Activated CD4-positive, alpha-beta T cell treated with anti-CD3 and anti-CD28 coated beads for 36 hours (primary cell): ENCODE measurements at regions of chr1 and their contacts with region 1.

Region 1: GRCh38 chr1:160726498-160727315 is 12.3 kb upstream of the SLAMF7 start:
- DNase-seq: peak; percentile 77
- ATAC-seq: peak; percentile 72
- H3K4me3 Mint-ChIP-seq: no peak overlapping the region
- H3K27ac Mint-ChIP-seq: no peak overlapping the region
- H3K4me1 Mint-ChIP-seq: peaks cover 28% of the 10 kb centered on the region
- H3K27me3 Mint-ChIP-seq: no peaks in the 10 kb centered on the region

Region 2: GRCh38 chr1:160675641-160676410 is 50.9 kb before region 1 on chr1:
- CTCF ChIA-PET with region 1: interaction called, 42 read pairs
- POLR2A ChIA-PET with region 1: no interaction called
- intact Hi-C with region 1: loop called (anchors 1 to 2 kb)
- DNase-seq: peak; percentile 89
- ATAC-seq: peak; percentile 70
- H3K4me3 Mint-ChIP-seq: peak overlapping the region; percentile 26
- H3K27ac Mint-ChIP-seq: peak overlapping the region; percentile 48
- H3K4me1 Mint-ChIP-seq: peaks cover 42% of the 10 kb centered on the region
- H3K27me3 Mint-ChIP-seq: no peaks in the 10 kb centered on the region

Region 3: DNA sequence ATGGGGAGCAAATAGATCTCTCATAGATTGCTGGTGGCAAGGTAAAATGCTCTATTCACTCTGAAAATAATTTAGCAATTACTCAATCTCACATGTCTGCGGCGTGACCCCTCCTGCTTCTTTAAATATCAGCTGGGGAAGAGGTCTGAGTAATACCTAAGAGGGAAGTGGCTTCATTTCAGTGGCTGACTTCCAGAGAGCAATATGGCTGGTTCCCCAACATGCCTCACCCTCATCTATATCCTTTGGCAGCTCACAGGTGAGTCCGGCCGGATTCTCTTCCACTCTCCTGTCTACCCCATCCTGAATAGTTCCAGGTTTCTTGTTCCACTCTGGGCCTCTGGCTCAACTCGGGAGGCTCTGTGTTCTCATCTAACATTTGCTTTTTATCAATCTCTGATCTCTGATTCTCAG is 12.4 kb after region 1 on chr1 and contains the start of gene SLAMF7:
- CTCF ChIA-PET with region 1: interaction called, 21 read pairs
- POLR2A ChIA-PET with region 1: no interaction called
- intact Hi-C with region 1: loop called in 1 of 2 experiments (anchors 2 kb)
- DNase-seq: peak; percentile 61
- ATAC-seq: peak; percentile 76
- H3K4me3 Mint-ChIP-seq: peak within 1 kb of the TSS; percentile 72
- H3K27ac Mint-ChIP-seq: peak within 1 kb of the TSS; percentile 85
- H3K4me1 Mint-ChIP-seq: peaks cover 69% of the 10 kb centered on the region
- H3K27me3 Mint-ChIP-seq: no peaks in the 10 kb centered on the region
- total RNA-seq, gene SLAMF7: 35.9 to 40.3 TPM

Region 4: DNA sequence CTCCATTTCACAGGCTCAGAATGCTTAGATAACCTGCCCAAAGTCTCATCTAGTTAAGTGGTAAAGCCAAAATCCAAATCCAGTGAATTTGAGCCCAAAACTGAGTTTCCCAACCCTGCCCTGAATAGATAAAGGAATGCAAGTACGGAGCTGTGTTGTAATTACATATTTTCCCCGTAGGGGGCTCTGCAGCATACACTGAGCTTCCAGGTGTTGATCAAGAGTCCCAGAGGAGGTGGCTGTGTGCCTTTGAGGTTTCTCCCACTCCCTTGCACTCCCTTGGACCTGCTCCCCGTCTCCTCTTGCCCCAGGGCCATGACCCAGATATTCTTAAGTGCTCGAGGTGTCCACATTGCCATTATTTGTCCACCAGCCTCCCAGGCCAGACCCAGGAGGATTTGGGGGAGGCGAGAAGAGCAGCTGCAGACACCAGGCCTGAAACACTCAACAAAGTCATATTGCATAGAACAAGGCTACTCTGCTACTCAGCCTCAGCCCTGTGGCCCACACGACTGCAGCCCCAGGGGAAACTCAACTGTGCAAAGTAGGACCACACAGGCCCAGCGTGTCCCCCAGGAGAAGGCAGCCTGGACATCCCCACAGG is 50.9 kb after region 1 on chr1:
- CTCF ChIA-PET with region 1: interaction called, 53 read pairs
- POLR2A ChIA-PET with region 1: no interaction called
- intact Hi-C with region 1: no loop called
- DNase-seq: peak; percentile 64
- ATAC-seq: peak; percentile 38
- H3K4me3 Mint-ChIP-seq: no peak overlapping the region
- H3K27ac Mint-ChIP-seq: peak overlapping the region; percentile 5
- H3K4me1 Mint-ChIP-seq: peaks cover 50% of the 10 kb centered on the region
- H3K27me3 Mint-ChIP-seq: no peaks in the 10 kb centered on the region

Region 5: GRCh38 chr1:160877221-160877620 is 150.5 kb after region 1 on chr1:
- CTCF ChIA-PET with region 1: interaction called, 31 read pairs
- POLR2A ChIA-PET with region 1: no interaction called
- intact Hi-C with region 1: loop called (anchors 2 to 5 kb)
- DNase-seq: no peak
- ATAC-seq: peak; percentile 70
- H3K4me3 Mint-ChIP-seq: no peak overlapping the region
- H3K27ac Mint-ChIP-seq: no peak overlapping the region
- H3K4me1 Mint-ChIP-seq: peaks cover 24% of the 10 kb centered on the region
- H3K27me3 Mint-ChIP-seq: no peaks in the 10 kb centered on the region

Region 6: DNA sequence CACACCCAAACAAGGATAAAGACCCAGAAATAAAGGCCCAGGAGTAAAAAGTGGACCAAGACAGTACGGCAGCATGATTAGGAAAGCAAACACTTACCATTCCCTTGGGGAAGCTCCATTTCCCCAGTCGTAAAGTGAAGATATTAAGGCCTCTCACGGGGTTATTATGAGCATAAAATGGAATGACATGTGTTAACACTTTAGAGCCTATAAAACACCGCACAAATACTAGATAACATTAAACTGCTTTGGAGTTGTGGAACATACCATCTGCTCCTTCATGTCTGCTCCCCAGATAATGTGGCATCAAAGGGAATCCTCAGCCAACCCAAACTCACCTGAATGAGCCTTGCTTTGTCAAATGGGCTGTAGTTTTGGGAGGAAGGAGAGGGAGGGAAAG is 236.8 kb after region 1 on chr1:
- CTCF ChIA-PET with region 1: interaction called, 3 read pairs
- POLR2A ChIA-PET with region 1: no interaction called
- intact Hi-C with region 1: loop called in 1 of 2 experiments (anchors 5 kb)
- DNase-seq: no peak
- ATAC-seq: no peak
- H3K4me3 Mint-ChIP-seq: no peak overlapping the region
- H3K27ac Mint-ChIP-seq: no peak overlapping the region
- H3K4me1 Mint-ChIP-seq: no peaks in the 10 kb centered on the region
- H3K27me3 Mint-ChIP-seq: peaks cover 2% of the 10 kb centered on the region

Region 7: GRCh38 chr1:161033751-161034150 is 307.0 kb after region 1 on chr1:
- CTCF ChIA-PET with region 1: no interaction called
- POLR2A ChIA-PET with region 1: no interaction called
- intact Hi-C with region 1: no loop called
- DNase-seq: peak; percentile 42
- ATAC-seq: peak; percentile 35
- H3K4me3 Mint-ChIP-seq: no peak overlapping the region
- H3K27ac Mint-ChIP-seq: no peak overlapping the region
- H3K4me1 Mint-ChIP-seq: peaks cover 30% of the 10 kb centered on the region
- H3K27me3 Mint-ChIP-seq: no peaks in the 10 kb centered on the region